ENCODE measurements at regions of chr11 and their contacts with region 1.

Region 1: GRCh38 chr11:60951899-60952741 is at the start of gene SLC15A3:
- DNase-seq: peak; percentile 62
- ATAC-seq: peak; percentile 88
- H3K4me3 Mint-ChIP-seq: peak within 1 kb of the TSS; percentile 91
- H3K27ac Mint-ChIP-seq: peak within 1 kb of the TSS; percentile 91
- H3K4me1 Mint-ChIP-seq: peaks cover 57% of the 10 kb centered on the region
- H3K27me3 Mint-ChIP-seq: no peaks in the 10 kb centered on the region
- CTCF ChIP-seq: no peak
- total RNA-seq, gene SLC15A3: 76.4 and 77.8 TPM in 2 replicates

Region 2: GRCh38 chr11:60841797-60842667 is 110.1 kb before region 1 on chr11 and contains the start of gene CCDC86:
- CTCF ChIA-PET with region 1: no interaction called
- POLR2A ChIA-PET with region 1: interaction called, 3 read pairs
- intact Hi-C with region 1: loop called (anchors 5 kb)
- DNase-seq: peak; percentile 100
- ATAC-seq: peak; percentile 96
- H3K4me3 Mint-ChIP-seq: peak within 1 kb of the TSS; percentile 83
- H3K27ac Mint-ChIP-seq: peak within 1 kb of the TSS; percentile 85
- H3K4me1 Mint-ChIP-seq: peaks cover 41% of the 10 kb centered on the region
- H3K27me3 Mint-ChIP-seq: no peaks in the 10 kb centered on the region
- CTCF ChIP-seq: no peak
- total RNA-seq, gene CCDC86: 30.3 and 30.6 TPM in 2 replicates

Region 3: DNA sequence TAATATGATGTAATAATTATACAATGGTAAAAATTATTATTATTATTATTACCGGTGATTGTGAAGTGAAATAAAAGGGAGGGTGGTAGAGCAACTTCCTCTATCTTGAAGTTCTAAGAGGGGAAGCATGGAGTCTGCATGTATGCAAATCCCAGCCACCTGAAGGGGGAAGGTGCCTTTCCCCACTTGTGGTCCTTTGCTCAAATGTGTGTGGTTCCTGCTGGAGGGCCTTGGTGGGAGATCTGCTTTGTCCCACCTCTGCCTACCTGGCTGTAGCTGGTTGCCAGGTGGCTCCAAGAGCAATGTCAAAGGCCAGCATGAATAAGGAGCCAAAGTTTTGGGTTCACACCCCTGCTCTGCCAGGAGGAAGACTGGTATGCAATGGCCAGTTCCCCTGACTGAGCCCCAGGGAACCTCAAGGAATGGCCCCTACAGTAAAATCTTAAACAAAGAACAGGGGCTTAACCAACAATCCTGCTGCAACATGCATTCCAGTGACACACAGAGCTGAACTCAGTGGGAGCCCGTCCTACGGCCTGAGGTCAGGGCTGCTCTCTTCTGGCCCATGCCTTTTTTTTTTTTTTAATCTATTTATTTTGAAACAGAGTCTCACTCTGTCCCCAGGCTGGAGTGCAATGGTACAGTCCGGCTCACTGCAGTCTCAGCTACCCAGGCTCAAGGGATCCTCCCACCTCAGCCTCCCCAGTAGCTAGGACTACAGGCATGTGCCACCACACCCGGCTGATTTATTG is 19.3 kb before region 1 on chr11:
- CTCF ChIA-PET with region 1: interaction called, 3 read pairs
- POLR2A ChIA-PET with region 1: interaction called, 60 read pairs
- intact Hi-C with region 1: loop called (anchors 1 kb)
- DNase-seq: no peak
- ATAC-seq: peak; percentile 57
- H3K4me3 Mint-ChIP-seq: peak overlapping the region; percentile 66
- H3K27ac Mint-ChIP-seq: peak overlapping the region; percentile 89
- H3K4me1 Mint-ChIP-seq: peaks cover 48% of the 10 kb centered on the region
- H3K27me3 Mint-ChIP-seq: no peaks in the 10 kb centered on the region
- CTCF ChIP-seq: no peak

Region 4: DNA sequence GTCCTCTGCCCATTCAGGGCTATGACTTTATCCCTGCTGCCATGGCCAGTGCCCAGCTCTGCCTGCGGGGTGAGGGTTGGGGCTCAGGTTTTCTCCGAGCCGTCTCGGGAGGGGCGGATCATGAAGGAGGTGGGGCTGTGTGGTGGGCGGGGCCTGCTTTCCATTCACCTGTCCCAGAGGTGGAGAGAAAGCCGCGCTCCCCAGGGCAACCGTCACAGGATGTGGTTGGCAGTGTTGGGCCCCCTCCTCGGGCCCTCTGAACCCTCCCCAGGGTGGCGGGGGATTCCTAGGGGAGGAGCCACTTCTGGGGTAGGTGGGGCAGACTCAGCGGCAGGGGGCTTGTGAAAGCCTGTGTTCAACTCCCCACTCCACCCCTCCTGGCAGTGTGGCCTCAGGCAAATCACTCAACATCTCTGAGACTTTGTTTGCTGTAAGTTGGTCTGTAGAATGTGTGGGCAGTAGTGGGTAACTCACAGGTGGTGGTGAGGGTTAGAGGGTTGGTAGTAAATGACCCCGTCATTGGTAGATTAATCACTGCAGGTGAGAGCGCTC is 69.6 kb after region 1 on chr11:
- CTCF ChIA-PET with region 1: no interaction called
- POLR2A ChIA-PET with region 1: interaction called, 3 read pairs
- intact Hi-C with region 1: loop called (anchors 1 kb)
- DNase-seq: peak; percentile 62
- ATAC-seq: peak; percentile 86
- H3K4me3 Mint-ChIP-seq: peak overlapping the region; percentile 74
- H3K27ac Mint-ChIP-seq: peak overlapping the region; percentile 83
- H3K4me1 Mint-ChIP-seq: peaks cover 56% of the 10 kb centered on the region
- H3K27me3 Mint-ChIP-seq: no peaks in the 10 kb centered on the region
- CTCF ChIP-seq: no peak

Region 5: DNA sequence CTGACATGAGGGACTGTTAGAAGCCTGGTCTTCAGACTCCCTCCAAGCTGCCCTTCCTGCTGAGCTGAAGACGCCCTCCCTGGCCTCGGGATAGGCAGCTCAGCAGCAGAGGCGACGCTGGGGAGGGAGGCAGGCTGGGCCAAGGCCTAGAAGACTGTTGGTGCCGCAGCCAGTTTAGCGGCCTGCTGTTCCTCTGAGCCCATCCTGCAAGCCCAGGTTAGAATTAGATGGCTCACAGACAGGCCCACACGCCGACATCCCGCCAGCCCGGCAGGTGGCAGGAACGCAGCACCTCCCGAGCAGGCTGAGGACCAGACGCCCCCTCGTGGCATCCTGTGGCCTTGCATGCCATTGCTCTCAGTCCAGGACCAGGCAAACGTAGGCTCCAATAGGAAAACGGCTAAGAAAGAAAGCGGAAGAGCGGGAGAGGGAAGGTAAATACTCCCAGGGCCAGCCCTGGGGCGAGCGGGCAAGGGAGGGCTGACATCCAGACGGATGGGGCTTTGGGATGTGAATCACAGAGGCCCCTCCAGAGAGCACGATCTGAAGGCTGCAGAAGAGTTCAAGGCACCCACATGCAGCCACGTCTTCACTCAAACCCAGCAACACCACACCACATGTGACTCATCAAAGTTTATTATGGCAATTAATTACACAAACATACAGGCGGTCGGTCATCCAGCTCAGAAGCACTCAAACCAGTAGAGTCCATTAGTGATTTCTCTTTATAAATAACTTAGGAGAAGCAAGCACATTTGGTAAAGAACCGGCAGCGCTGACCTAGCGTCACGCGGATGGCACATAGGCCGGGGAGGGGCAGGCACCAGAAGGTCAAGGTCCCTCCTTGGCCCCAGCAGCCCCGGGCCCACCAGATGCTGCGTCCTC is 177.8 kb after region 1 on chr11:
- CTCF ChIA-PET with region 1: no interaction called
- POLR2A ChIA-PET with region 1: interaction called, 3 read pairs
- intact Hi-C with region 1: loop called (anchors 5 kb)
- DNase-seq: peak; percentile 82
- ATAC-seq: peak; percentile 100
- H3K4me3 Mint-ChIP-seq: no peak overlapping the region
- H3K27ac Mint-ChIP-seq: peak overlapping the region; percentile 6
- H3K4me1 Mint-ChIP-seq: peaks cover 8% of the 10 kb centered on the region
- H3K27me3 Mint-ChIP-seq: no peaks in the 10 kb centered on the region
- CTCF ChIP-seq: peak; percentile 96

Region 6: GRCh38 chr11:61332797-61333549 is 380.9 kb after region 1 on chr11 and contains the starts of genes DDB1 and TKFC:
- CTCF ChIA-PET with region 1: no interaction called
- POLR2A ChIA-PET with region 1: no interaction called
- intact Hi-C with region 1: no loop called
- DNase-seq: peak; percentile 85
- ATAC-seq: peak; percentile 92
- H3K4me3 Mint-ChIP-seq: peak within 1 kb of the TSS; percentile 92
- H3K27ac Mint-ChIP-seq: peak within 1 kb of the TSS; percentile 93
- H3K4me1 Mint-ChIP-seq: peaks cover 49% of the 10 kb centered on the region
- H3K27me3 Mint-ChIP-seq: no peaks in the 10 kb centered on the region
- CTCF ChIP-seq: no peak
- total RNA-seq, gene DDB1: 201 and 218 TPM in 2 replicates
- total RNA-seq, gene TKFC: 59.8 and 63.9 TPM in 2 replicates

Measured in activated B cell treated with CpG ODN at 0.5 μM for 24 hours (primary cell).